Endothelial cell of umbilical vein (primary cell): ENCODE measurements at regions of chr22 and their contacts with region 1.

Region 1: DNA sequence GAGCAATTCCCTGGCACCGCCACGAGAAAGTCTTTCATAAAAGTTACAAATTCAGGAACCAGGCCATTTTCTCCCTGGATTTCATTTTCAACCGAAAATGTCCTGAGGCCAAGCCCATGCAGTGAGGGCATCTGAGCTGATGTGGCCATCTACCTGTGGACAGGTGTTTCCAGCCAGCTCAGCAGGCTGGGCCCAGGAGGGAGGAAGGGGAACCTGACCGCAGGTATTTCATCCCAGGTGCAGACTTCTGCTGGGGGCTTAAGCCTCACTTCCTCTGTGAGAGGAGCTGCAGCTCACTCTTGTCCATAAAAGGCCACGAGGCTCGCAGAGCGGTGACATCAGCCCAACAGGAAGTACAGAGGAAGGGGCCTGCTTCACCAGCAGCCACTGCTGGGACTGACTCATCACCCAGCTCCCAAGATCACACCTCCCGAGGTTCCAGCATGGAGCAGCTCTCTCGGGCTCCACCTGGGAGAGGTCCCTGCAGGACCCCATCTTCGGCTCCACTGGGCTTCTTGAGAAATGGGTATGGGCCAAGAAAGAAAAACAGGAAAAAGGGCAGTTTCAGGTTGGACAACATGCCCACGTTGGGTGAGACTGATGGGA is 56.4 kb downstream of the MYH9 start:
- DNase-seq: peak; percentile 93
- H3K4me3 ChIP-seq: no peak overlapping the region
- H3K27ac ChIP-seq: peak overlapping the region; percentile 99
- H3K4me1 ChIP-seq: peaks cover 97% of the 10 kb centered on the region
- H3K27me3 ChIP-seq: no peaks in the 10 kb centered on the region
- CTCF ChIP-seq: peak in 1 of 2 donors; percentile 3
- POLR2A ChIP-seq: peak; percentile 67

Region 2: DNA sequence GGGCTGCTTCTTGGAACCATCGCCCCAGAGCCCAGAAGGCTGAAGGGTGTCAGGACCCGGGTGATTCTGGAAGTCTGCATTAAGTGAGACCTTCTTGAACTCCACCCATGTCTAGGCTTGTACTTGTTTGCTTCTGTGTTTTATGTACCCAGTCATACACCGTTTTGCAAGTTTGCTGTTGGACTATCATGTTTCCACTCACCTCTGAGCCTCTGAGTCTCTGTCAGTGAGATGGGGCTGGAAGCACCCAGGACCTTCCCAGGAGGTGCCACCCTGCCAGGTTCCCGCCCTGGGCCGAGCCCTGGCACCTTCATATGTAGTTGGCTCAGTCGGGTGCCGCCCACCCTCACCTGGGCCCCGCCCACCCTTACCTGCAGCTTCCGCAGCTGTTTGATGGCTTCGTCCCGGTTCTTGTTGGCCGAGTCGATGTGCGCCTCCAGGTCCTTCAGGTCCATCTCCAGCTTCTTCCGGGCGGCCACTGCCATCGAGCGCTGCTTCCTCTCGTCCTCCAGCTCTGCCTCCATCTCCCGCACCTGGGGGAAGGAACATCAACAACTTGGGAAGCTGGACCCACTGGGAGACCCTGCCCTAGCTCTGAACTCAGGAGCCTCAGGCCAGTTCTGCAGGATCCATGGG is 43.4 kb before region 1 on chr22:
- CTCF ChIA-PET with region 1: no interaction called
- POLR2A ChIA-PET with region 1: no interaction called
- dilution Hi-C with region 1: no loop called
- intact Hi-C with region 1: no loop called
- DNase-seq: no peak
- H3K4me3 ChIP-seq: no peak overlapping the region
- H3K27ac ChIP-seq: no peak overlapping the region
- H3K4me1 ChIP-seq: no peaks in the 10 kb centered on the region
- H3K27me3 ChIP-seq: no peaks in the 10 kb centered on the region
- CTCF ChIP-seq: no peak
- POLR2A ChIP-seq: no peak

Region 3: DNA sequence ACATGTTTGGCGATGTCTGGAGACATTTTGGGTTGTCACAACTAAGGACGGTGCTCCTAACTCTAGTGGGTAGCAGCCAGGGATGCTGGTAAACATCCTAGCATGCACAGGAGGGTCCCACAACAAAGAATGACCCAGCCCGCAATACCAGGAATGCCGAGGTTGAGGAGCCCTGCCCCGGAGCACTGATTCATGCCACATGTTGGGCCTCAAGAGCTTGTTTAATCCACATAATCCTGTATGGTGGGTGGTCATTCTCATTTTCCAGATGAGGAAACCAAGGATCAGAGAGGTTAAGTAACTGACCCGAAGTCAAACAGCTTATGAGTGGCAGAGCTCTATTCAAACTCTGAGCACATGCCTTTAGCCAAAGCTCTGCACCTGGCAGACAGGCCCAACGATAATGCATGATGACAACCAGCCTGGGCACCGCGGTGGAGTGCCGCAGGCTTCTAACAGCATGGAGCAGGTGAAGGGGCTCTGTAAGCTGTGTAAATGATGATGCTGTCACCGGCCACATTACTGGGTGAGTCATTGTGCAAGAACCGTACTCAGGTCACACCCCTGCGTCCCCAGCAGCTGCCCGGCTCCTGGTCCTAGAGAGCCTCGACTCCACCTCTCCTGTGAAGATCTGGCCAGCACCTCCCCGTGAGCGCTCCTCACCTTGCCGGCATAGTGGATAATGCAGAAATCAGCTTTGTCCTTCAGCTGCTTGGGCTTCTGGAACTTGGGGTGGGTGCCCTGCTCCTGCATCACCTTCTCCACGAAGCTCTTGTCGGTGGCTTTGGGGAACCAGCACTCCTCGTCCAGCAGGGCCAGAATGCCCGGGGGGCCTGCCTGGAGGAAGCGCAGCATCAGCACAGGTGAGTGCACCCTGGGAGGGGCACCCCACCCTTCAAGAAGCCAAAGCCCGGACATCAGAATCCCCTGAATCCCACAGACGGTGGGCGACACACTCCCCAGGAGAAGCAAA is 19.7 kb before region 1 on chr22:
- CTCF ChIA-PET with region 1: no interaction called
- POLR2A ChIA-PET with region 1: interaction called, 4 read pairs
- dilution Hi-C with region 1: no loop called
- intact Hi-C with region 1: loop called (anchors 1 kb)
- DNase-seq: no peak
- H3K4me3 ChIP-seq: no peak overlapping the region
- H3K27ac ChIP-seq: no peak overlapping the region
- H3K4me1 ChIP-seq: peaks cover 16% of the 10 kb centered on the region
- H3K27me3 ChIP-seq: no peaks in the 10 kb centered on the region
- CTCF ChIP-seq: no peak
- POLR2A ChIP-seq: peak; percentile 21

Region 4: DNA sequence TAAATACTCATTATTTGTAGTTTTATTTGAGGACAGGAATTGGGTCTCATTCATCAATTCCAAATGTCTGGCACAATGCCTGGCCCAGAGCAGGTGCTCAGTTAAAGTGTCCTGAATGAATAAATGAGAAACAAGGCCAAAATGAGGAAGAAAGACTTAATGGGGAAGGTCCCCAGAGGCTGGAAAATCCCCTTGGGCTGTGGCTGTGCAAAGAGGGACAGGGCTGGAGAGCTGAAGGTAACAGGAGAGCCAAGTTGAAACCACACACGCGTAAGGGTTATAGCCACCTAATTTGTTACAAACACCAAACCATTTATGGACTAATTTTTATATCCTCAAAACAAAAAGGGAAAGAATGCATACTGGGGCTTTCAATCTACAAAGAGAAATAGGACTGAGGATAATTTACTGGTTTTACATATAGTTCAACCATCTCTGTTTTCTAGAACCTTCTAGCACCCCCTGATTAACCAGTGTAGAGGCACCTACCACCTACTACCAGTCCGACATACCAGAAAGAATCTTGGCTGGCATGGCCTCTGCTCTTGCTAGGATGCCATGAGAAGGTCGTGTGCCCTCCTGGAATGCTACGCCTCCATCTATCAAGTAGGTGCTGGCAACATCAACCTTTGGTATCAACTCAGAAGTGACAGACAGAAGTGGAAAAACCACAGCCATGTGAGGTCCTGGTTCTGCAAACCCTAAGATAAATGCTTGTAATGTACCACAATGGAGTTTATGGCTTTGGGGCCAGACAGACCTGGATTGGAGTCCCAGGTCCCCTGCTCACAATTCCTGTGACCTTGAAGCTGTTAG is 28.0 kb after region 1 on chr22:
- CTCF ChIA-PET with region 1: interaction called, 8 read pairs
- POLR2A ChIA-PET with region 1: interaction called, 5 read pairs
- dilution Hi-C with region 1: no loop called
- intact Hi-C with region 1: loop called (anchors 1 kb)
- DNase-seq: no peak
- H3K4me3 ChIP-seq: no peak overlapping the region
- H3K27ac ChIP-seq: peak overlapping the region; percentile 56
- H3K4me1 ChIP-seq: peaks cover 92% of the 10 kb centered on the region
- H3K27me3 ChIP-seq: no peaks in the 10 kb centered on the region
- CTCF ChIP-seq: no peak
- POLR2A ChIP-seq: no peak

Region 5: DNA sequence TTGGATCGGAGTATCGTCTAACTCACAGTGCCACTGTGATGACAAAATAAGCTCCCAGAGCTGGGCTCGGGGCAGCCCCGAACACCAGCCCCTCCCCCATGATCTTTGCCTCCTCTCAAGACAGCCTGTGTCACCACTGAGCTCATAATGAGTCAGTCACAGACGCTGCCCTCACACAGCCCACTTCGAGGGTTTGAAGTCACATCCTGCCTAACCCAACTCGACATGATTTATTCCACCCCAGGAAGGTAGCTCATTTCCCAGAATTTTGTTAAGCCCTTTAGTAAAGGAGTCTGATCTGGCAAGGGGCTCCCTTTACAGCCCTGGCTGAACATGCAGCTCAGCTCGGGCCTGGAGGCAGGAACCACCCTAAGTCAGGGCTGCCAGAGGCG is 33.6 kb after region 1 on chr22:
- CTCF ChIA-PET with region 1: interaction called, 3 read pairs
- POLR2A ChIA-PET with region 1: interaction called, 19 read pairs
- dilution Hi-C with region 1: no loop called
- intact Hi-C with region 1: loop called (anchors 1 kb)
- DNase-seq: peak; percentile 94
- H3K4me3 ChIP-seq: no peak overlapping the region
- H3K27ac ChIP-seq: peak overlapping the region; percentile 88
- H3K4me1 ChIP-seq: peaks cover 92% of the 10 kb centered on the region
- H3K27me3 ChIP-seq: no peaks in the 10 kb centered on the region
- CTCF ChIP-seq: no peak
- POLR2A ChIP-seq: peak; percentile 70

Region 6: DNA sequence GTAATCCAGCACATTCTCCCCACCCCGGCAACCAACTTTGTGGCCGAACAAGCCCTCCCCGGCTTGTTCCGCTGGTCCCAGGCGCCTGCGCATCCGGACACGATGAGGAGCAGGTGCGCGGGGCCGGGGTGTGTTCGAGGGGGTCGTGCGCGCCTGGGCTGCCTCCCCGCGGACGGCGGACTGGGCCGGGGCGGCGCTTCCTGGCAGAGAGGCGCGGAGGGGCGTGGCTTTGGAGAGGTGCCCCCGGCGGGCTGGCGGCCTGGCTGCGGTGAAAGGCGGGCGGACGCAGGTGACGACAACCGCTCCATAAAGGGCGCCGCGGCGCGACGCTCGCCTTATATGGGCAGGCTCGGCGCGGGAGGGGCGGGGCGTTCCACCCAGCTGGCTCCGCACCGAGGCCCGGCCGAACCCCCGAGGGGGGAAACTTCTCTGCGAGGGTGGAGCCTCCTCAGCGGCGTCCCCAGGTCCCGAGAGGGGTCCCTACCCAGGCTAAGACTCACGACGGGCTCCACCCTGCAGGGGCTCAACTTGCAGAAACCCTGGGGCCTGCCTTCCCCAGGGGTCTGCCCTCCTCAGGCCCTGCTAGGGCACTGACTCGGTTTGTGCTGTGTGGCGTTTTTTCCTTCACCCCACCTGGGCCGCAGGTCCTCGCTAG is 123.6 kb after region 1 on chr22:
- CTCF ChIA-PET with region 1: interaction called, 3 read pairs
- POLR2A ChIA-PET with region 1: interaction called, 3 read pairs
- dilution Hi-C with region 1: no loop called
- intact Hi-C with region 1: loop called (anchors 1 kb)
- DNase-seq: peak; percentile 92
- H3K4me3 ChIP-seq: peak overlapping the region; percentile 20 to 50 (median 47)
- H3K27ac ChIP-seq: peak overlapping the region; percentile 72
- H3K4me1 ChIP-seq: peaks cover 24% of the 10 kb centered on the region
- H3K27me3 ChIP-seq: no peaks in the 10 kb centered on the region
- CTCF ChIP-seq: peak in 1 of 2 donors; percentile 8
- POLR2A ChIP-seq: peak; percentile 32

Region 7: DNA sequence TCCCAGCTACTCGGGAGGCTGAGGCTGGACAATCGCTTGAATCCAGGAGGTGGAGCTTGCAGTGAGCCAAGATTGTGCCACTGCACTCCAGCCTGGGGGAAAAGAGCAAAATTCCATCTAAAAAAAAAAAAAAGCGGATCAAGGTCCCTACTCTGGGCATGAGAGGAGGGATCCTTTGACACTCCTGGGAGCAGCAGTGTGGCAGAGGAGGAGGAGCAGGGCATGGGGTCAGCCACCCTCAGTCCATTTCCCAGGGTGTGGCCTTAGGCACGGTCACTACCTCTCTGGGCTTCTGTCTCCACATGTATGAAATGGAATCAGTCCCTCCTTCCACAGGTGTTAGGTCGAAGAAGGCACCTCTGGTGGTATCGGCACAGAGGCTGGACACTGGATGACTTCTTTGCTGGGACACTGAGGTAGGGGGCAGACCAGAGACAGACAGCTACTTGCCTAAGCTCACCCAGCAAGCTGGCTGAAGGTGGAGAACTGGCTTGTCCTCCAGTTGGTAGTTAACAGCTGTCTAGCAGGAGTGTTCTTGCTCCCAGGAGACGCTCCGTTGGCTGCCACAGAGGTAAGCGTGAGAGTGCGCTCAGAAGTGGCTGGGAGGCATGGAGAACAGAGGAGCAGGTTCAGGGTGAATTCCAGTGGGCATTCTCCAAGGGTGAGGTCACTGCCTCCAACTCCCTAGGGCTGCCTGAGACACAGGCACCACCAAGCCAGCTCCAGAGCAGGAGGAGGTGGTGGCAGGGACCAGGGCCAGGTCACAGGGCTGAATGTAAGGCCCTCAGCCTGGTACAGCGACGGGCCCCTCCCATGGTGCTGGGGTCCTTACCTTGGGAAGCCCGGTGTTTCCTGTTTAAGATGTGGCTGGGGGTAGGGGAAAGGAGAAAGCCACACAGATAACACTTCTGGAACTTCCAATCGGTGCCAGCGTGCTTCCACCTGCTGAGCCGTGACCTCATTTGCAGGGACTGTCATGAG is 130.6 kb after region 1 on chr22:
- CTCF ChIA-PET with region 1: interaction called, 56 read pairs
- POLR2A ChIA-PET with region 1: interaction called, 6 read pairs
- dilution Hi-C with region 1: no loop called
- intact Hi-C with region 1: loop called (anchors 1 kb)
- DNase-seq: peak; percentile 67
- H3K4me3 ChIP-seq: no peak overlapping the region
- H3K27ac ChIP-seq: peak overlapping the region; percentile 59
- H3K4me1 ChIP-seq: peaks cover 49% of the 10 kb centered on the region
- H3K27me3 ChIP-seq: no peaks in the 10 kb centered on the region
- CTCF ChIP-seq: no peak
- POLR2A ChIP-seq: no peak

Region 8: DNA sequence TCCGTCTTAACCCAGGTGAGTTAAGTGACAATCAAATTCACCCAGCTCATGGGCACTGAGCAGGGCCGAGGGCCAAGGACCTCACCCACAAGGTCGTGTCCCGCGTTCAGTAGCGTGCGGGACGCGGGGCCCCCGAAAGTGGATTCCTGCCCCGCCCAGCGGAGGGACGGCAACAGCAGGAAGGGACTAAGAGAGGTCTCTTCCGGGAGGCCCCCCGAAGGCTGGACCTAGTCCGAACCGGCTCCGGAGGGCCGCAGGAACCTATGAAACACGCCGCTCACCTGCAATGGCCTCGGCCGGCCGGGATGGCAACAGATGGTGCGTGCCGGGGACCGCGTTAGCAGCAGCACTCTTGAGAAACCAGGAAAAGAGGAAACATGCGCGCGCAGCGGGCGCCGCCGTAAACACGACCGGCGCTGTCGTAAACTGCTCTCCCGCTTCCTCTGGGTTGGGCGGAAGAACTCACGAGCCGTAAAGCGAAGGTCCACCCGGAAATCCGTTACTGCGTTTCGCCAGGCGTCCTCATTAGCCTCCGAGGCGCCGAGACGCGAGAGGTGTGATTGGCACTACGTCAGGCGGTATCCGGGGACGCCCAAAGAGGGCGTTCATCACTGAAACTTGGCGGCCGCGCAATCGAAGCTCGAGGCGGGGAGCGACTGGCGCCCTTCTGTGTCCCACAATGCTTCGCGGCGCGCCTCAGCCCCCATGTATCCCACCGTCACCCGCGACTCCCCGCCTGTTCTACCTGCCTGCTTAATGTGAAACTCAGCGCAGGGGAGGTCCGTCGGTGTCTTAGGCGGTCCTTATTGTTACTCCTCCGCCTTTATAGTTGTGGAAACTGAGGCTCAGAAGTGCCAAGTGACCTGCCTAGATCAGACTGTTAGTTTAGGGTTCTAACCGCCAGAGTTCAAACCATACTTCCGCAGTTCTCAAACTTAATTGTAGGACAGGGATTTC is 197.7 kb after region 1 on chr22 and contains the start of gene EIF3D:
- CTCF ChIA-PET with region 1: no interaction called
- POLR2A ChIA-PET with region 1: no interaction called
- dilution Hi-C with region 1: no loop called
- intact Hi-C with region 1: loop called (anchors 5 kb)
- DNase-seq: peak; percentile 100
- H3K4me3 ChIP-seq: peak within 1 kb of the TSS; percentile 68 to 95 (median 72)
- H3K27ac ChIP-seq: peak within 1 kb of the TSS; percentile 84
- H3K4me1 ChIP-seq: peaks cover 15% of the 10 kb centered on the region
- H3K27me3 ChIP-seq: no peaks in the 10 kb centered on the region
- CTCF ChIP-seq: no peak
- POLR2A ChIP-seq: peak; percentile 86
- total RNA-seq, gene EIF3D: 192 and 201 TPM in 2 replicates